ENCODE measurements at regions of chr14 and their contacts with region 1.

Region 1: DNA sequence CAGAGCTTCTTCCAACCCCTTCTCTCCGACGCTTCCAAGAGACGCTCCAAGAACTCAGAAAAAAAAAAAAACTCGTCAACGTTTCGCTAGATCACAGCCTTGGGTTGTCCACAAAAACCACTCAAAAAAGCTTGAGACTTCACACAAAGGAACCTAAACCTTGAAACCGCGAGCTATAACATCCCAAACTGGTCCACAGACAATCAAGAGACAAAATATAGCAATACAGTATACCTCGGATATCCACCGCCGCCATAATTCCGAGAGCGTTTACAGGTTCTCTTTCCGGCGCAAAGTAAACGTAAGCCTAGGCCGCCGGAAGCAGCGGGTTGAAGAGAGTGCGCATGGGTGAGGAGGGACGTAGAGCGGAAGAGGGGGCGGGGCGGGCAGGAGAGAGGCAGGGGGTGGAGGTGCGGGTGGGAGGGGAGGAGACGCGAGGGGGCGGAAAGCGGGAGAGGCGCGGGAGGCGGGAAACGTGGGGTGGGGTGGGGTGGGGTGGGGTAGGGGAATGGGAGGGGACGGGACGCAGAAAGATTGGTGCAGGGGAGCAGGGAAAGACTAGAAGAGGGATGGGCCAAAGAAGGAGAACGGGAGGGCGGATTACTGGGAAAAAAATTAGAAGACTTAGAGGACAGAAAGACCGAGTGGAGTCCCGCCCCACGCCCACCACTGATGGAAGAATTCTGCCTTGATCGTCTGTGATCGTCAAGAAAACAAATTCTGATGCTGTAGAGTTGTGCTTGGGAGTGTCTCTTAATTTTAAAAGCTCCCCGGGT is at the start of gene MED6:
- DNase-seq: peak; percentile 73 to 96
- H3K4me3 ChIP-seq: peak within 1 kb of the TSS; percentile 74 to 84
- H3K27ac ChIP-seq: peak within 1 kb of the TSS; percentile 76 to 77
- H3K4me1 ChIP-seq: peaks cover 8 to 14% of the 10 kb centered on the region in 2 donors
- H3K27me3 ChIP-seq: no peaks in the 10 kb centered on the region
- CTCF ChIP-seq: no peak
- total RNA-seq, gene MED6: 38.0 TPM

Region 2: DNA sequence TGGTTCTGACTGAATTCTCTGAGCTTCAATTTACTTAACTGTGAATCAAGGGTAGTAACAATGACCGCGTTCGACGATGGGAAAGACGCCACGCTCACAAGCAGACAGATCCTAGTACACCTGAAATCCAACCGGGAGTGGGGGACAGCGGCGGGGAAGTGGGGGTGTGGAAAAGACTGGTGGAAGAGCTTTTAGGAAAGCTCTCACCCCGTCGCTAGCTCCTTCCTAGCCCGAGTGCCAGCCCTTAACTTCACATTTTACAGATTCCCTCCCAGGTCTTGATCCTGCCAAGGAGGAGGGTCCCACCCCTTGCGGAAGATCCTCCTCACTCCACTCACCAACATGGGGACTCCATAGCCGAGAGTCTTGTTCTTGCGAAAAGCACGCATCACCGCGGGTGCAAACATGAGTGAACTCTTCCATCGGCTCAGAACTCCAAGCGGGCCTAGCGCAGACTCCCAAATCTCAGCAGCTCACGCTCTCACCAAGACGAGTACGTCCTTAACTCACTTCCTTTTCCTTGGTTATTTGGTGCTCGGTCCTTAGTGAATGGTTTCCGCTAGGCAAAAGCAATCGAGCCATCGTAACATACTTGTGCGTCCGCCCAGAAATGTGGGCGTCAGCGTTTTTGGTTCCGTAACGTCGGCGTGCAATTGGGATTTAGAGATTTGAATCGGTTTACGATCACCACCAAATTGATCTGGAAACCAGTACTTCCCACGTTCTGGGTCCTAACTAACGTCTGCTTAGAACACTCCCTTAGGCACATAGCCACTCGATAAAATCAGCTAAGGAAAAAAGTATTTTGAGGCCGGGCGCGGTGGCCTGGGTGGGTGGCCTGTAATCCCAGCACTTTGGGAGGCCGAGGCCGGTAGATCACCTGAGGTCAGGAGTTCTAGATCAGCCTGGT is 241.1 kb before region 1 on chr14 and contains the start of gene COX16:
- intact Hi-C with region 1: loop called (anchors 1 kb)
- DNase-seq: peak; percentile 43 to 92
- H3K4me3 ChIP-seq: peak within 1 kb of the TSS; percentile 74 to 75
- H3K27ac ChIP-seq: peak within 1 kb of the TSS; percentile 77 to 86
- H3K4me1 ChIP-seq: no peaks in the 10 kb centered on the region
- H3K27me3 ChIP-seq: no peaks in the 10 kb centered on the region
- CTCF ChIP-seq: no peak
- total RNA-seq, gene COX16: 13.4 TPM

Region 3: GRCh38 chr14:70585219-70585618 is 15.4 kb before region 1 on chr14:
- intact Hi-C with region 1: no loop called
- DNase-seq: no peak
- H3K4me3 ChIP-seq: no peak overlapping the region
- H3K27ac ChIP-seq: no peak overlapping the region
- H3K4me1 ChIP-seq: no peaks in the 10 kb centered on the region
- H3K27me3 ChIP-seq: no peaks in the 10 kb centered on the region
- CTCF ChIP-seq: no peak

Region 4: GRCh38 chr14:70640938-70641547 is 40.5 kb after region 1 on chr14:
- intact Hi-C with region 1: loop called (anchors 5 kb)
- DNase-seq: no peak
- H3K4me3 ChIP-seq: peak overlapping the region; percentile 63 to 88
- H3K27ac ChIP-seq: no peak overlapping the region
- H3K4me1 ChIP-seq: peaks cover 0 to 4% of the 10 kb centered on the region in 2 donors
- H3K27me3 ChIP-seq: peaks cover 7% of the 10 kb centered on the region
- CTCF ChIP-seq: no peak

Region 5: DNA sequence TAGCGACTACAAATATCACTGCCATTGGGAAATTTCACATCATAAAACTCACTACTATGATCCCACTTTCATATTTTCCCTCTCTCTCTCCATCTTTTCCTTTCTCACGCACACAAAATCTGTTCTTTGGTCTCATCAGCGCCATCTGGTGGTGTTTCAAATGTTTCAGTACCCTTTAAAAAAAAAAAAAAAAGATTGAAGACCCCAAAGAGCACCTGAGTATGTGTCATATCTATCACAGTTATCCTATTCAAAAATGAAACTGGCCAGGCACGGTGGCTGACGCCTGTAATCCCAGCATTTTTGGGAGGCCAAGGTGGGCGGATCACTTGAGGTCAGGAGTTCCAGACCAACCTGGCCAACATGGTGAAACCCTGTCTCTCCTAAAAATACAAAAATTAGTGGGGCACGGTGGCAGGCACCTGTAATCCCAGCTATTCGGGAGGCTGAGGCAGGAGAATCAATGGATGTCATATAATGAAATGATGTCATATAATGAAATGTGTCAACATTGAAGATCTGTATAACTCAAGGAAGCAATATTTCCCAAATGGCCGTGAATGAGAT is 113.6 kb after region 1 on chr14:
- intact Hi-C with region 1: loop called (anchors 2 kb)
- DNase-seq: no peak
- H3K4me3 ChIP-seq: peak overlapping the region in 1 of 2 donors; percentile 18
- H3K27ac ChIP-seq: peak overlapping the region in 1 of 2 donors; percentile 64
- H3K4me1 ChIP-seq: peaks cover 0 to 8% of the 10 kb centered on the region in 2 donors
- H3K27me3 ChIP-seq: no peaks in the 10 kb centered on the region
- CTCF ChIP-seq: peak; percentile 43 to 73 (median 67)

Region 6: DNA sequence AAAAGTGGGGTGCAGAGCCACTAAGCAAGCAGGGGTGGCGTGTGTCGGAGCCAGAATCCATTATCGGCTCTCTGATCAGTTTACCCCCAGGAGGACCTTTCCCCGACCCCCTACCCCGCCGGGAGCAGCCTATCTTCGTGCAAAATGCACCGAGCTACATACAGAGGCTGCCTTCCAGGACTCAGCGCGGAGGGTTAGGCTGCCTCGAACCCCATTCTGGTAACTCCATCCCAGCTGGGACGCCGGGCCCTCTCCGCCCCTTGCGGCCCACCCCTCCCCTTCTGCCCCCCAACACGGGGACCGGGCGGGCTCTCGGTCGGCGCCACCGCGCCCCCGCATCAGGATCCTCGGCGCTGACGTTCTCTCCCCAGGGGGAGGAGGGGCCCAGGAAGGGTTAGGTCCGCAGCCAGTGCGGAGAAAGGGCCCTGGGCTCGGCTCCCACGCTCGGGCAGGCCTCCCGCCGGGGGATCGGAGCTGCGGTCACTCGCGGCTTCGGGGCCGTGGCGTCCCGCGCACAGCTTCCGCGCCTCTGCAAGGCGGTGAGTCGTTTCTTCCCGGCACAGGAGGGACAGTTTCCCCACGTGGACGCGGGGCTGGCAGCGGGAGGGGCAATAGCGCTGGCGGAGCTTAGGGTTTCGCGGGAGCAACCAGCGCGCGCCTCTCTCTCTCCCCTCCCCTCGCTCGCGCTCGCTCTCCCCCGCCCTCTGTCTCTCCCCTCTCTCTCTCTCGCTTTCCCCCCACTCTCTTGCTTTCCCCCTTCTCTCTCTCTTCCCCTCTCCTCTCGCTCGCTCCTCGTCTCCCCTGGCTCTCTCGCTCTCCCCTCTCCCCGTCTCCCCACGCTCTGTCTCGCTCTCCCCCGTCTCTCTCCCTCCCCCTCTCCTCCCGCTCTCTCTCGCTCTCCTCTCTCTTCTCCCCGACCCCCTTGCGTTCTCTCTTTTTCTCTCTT is 221.3 kb after region 1 on chr14:
- intact Hi-C with region 1: loop called (anchors 1 kb)
- DNase-seq: peak in 1 of 2 donors; percentile 74
- H3K4me3 ChIP-seq: peak overlapping the region; percentile 84 to 86
- H3K27ac ChIP-seq: no peak overlapping the region
- H3K4me1 ChIP-seq: peaks cover 0 to 11% of the 10 kb centered on the region in 2 donors
- H3K27me3 ChIP-seq: no peaks in the 10 kb centered on the region
- CTCF ChIP-seq: no peak

Region 7: GRCh38 chr14:70972107-70972976 is 371.8 kb after region 1 on chr14:
- intact Hi-C with region 1: loop called (anchors 5 kb)
- DNase-seq: peak in 1 of 2 donors; percentile 93
- H3K4me3 ChIP-seq: no peak overlapping the region
- H3K27ac ChIP-seq: no peak overlapping the region
- H3K4me1 ChIP-seq: no peaks in the 10 kb centered on the region
- H3K27me3 ChIP-seq: no peaks in the 10 kb centered on the region
- CTCF ChIP-seq: peak; percentile 64 to 90 (median 88)